ENCODE measurements at regions of chr5 and their contacts with region 1.

Region 1: GRCh38 chr5:138549414-138549813 is 6.4 kb upstream of the ETF1 start:
- DNase-seq: no peak
- H3K4me3 ChIP-seq: no peak overlapping the region
- H3K27ac ChIP-seq: no peak overlapping the region
- H3K27me3 ChIP-seq: no peaks in the 10 kb centered on the region
- CTCF ChIP-seq: no peak

Region 2: GRCh38 chr5:138568061-138568824 is 18.8 kb after region 1 on chr5:
- CTCF ChIA-PET with region 1: interaction called, 13 read pairs
- POLR2A ChIA-PET with region 1: interaction called, 3 read pairs
- DNase-seq: no peak
- H3K4me3 ChIP-seq: no peak overlapping the region
- H3K27ac ChIP-seq: no peak overlapping the region
- H3K27me3 ChIP-seq: no peaks in the 10 kb centered on the region
- CTCF ChIP-seq: 0 out of 2 replicates have a peak, but pooled peaks have one; percentile 13

Region 3: DNA sequence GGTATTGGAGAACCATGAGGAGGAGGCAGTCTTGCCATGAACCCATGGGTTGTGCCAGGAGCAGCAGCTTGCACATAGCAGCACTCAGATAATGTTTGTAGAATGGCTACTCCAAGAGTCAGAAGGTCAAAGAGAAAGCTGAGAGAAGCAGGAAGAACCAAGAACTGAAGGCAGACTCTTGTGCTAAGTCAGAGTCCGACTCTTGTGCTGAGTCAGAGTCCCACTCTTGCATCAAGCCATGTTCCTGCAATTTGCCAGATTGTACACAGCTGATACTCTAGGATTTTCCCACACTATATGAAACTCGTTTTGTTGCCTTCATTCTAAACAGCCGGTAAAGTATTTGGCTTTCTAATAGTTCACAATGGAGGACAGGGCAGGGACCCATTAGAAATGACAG is 52.0 kb after region 1 on chr5:
- CTCF ChIA-PET with region 1: no interaction called
- POLR2A ChIA-PET with region 1: no interaction called
- DNase-seq: peak; percentile 87
- H3K4me3 ChIP-seq: no peak overlapping the region
- H3K27ac ChIP-seq: peak overlapping the region; percentile 43
- H3K27me3 ChIP-seq: peaks cover 9% of the 10 kb centered on the region
- CTCF ChIP-seq: no peak

Region 4: GRCh38 chr5:139385061-139386049 is 835.9 kb after region 1 on chr5:
- CTCF ChIA-PET with region 1: no interaction called
- POLR2A ChIA-PET with region 1: no interaction called
- DNase-seq: no peak
- H3K4me3 ChIP-seq: no peak overlapping the region
- H3K27ac ChIP-seq: no peak overlapping the region
- H3K27me3 ChIP-seq: no peaks in the 10 kb centered on the region
- CTCF ChIP-seq: no peak